ENCODE measurements at regions of chr1 and their contacts with region 1.

Region 1: DNA sequence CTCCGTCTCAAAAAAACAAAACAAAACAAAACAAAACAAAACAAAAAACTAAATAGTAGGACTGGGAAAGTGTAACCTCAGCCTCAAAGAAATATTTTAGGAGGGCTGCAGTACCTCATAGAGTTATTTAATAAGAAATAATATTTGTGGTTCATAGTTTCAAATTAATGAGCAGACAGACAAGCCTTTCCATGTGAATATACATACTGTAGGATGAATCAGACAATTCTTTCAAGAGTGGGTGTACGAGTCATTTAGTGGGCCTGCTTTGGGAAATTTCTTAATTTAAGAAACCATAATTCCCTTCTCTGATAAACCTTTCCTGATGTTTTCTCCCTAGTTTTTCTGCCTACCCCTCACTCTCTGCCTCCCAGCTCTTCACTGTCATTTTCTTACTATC is 52.5 kb downstream of the CDC14A start:
- DNase-seq: peak; percentile 6
- ATAC-seq: no peak
- H3K4me3 ChIP-seq: no peak overlapping the region
- H3K27ac ChIP-seq: no peak overlapping the region
- H3K4me1 ChIP-seq: no peaks in the 10 kb centered on the region
- H3K27me3 ChIP-seq: no peaks in the 10 kb centered on the region
- CTCF ChIP-seq: no peak

Region 2: DNA sequence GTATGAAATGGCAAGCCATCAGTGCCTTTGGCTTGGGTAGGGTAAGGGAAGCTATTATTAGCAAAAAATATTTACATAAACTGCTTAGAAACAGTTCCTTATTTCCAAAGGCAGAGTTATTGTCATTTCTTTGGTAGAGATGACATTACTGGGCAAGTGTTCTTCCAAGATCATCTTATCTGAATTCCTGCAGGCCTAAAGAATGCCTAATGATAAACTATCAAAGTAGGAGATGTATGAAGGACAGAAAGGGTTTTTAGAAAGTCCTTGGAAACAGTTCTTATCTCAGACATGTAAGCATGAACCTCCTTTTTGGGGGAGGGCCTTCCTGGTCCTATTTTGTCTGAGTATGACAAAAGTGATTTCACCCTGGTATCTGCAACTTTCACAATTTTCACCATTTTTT is 633.3 kb before region 1 on chr1:
- CTCF ChIA-PET with region 1: no interaction called
- POLR2A ChIA-PET with region 1: interaction called, 37 read pairs
- intact Hi-C with region 1: no loop called
- DNase-seq: no peak
- ATAC-seq: no peak
- H3K4me3 ChIP-seq: no peak overlapping the region
- H3K27ac ChIP-seq: no peak overlapping the region
- H3K4me1 ChIP-seq: peaks cover 6% of the 10 kb centered on the region
- H3K27me3 ChIP-seq: no peaks in the 10 kb centered on the region
- CTCF ChIP-seq: no peak

Measured in PC-3 (cell line).